ENCODE measurements at regions of chr4 and their contacts with region 1.

Region 1: DNA sequence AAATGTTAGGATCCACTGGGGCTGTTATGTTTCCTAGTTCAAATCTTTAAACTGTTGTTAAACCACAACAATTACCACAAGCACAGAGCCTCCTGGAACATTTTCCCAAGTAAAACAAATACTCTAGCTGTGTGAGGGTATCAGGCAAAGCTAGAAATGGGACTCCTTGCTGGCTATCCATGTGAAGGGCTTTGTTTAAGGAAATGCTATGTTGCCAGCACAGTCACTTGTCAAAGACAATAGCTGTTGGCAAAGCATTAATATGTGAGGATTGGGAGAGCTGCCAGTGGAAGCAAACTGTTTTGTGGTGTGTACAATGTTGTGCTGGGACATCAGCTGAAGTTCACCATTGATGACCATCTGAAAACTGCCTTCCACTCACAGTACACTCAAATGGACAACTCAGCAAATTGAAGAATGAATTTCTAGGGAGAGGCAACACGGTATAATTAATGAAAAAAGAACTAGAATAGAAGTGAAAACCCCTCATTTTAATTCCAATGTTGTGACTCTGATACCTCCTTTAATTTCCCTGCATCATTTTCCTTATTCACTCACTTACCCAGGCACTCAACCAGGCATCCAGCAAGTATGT is 100.8 kb downstream of the ANXA3 start:
- DNase-seq: peak in 5 of 10 donors; percentile 24 to 83 (median 47)

Region 2: GRCh38 chr4:78704981-78705683 is 52.8 kb after region 1 on chr4:
- intact Hi-C with region 1: loop called (anchors 2 kb)
- DNase-seq: no peak

Region 3: DNA sequence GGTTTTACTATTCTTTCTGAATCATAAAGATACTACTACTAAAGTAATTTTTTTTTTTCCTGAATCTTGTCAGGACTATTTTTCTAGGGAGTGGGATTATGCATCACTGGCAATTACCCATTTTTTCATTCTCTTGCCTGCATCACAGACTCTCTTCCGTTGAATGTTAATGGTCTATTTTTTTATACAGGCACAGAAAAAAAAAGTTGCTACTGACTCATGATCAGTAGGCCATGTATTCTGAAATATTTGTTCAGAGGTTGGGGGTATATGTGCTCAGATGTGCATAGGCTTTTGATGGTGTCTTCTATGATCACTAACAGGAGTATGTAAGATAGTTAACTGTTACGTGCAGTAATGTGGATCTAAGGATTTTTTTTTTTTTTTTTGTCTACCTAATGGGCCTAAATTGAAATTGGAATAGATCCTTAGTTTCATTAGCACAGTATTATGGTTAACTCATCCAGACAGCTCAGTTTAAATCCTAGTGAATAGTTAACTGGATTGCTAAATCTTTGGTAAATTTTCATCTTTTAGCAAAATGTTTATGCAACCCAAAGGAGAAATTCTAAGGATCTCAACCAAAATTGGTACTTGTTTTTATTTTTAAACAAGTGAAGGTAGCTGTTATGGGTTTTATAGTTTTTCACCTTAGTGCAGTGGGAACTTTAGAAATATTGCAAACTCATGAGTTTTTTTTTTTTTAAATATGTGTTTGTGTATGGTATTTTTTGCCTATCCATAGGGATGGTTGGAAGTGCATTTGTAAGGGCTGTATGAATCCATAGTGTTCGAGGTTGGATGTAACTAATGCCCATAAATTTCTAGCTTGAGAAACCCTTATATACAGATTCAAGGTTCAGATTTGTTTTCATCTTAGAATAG is 135.9 kb after region 1 on chr4:
- intact Hi-C with region 1: no loop called
- DNase-seq: no peak

Region 4: GRCh38 chr4:78809928-78810835 is 157.8 kb after region 1 on chr4:
- intact Hi-C with region 1: no loop called
- DNase-seq: no peak

Region 5: DNA sequence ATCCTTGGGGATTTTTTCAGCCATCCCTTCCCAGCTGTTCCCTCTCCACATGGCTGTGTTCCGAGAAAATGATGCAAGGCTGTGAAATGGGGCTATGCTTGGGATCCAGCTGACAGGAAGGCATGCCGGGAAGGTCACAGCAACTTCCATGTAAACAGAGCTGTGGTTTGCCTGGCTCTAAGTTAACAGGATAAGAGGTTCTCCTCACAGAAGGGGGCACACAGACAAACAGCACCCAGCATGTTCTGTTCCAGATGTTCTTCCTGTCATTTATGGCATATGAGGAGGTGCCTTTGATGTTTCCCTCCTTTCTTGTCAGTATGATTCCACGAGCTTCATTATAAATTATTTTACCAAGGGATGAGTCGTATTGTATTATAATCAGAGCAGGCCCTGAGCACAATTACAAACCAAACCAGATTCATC is 1199.9 kb after region 1 on chr4:
- intact Hi-C with region 1: no loop called
- DNase-seq: no peak